ENCODE measurements at regions of chr6 and their contacts with region 1.

Region 1: DNA sequence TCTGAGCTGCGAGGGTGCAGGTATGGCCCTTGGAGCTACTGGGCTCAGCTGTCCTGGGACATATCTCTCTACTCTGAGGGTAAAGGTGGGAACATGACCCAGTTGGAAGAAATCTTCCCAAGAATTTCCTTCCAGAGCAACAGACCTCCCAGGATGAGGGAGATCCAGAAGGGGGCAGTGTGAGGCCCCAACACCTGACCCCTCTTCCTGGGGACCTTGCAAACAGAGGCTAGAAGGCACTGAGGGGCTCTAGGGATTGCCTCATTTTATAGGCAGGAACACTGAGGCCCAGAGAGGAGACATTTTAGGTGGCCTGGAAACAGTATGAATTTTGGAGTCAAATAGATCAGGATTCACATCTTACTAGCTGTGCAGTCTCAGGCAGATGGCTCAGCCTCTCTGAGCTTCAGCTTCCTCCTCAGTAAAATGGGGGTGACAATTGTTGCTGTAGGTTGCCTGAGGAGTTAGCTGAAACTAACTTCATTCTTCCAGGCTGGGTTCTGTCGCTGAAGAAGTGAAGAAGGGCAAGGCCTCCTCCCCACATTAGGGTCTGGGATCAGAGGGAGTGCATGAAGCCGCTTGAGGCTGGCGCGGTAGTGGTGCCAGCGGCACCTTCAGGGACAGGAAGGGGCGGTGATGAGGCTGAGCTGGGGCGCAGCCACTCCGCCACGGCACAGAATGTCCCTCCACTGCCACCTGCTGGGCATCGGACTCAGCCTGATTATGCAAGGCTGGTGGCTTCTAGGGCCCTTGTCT is 11.4 kb downstream of the KCNK17 start:
- DNase-seq: peak; percentile 88 to 91
- H3K4me3 ChIP-seq: no peak overlapping the region
- H3K27ac ChIP-seq: no peak overlapping the region
- H3K4me1 ChIP-seq: peaks cover 0 to 7% of the 10 kb centered on the region in 2 donors
- H3K27me3 ChIP-seq: no peaks in the 10 kb centered on the region
- CTCF ChIP-seq: peak; percentile 73 to 97 (median 92)
- POLR2A ChIP-seq: no peak

Region 2: DNA sequence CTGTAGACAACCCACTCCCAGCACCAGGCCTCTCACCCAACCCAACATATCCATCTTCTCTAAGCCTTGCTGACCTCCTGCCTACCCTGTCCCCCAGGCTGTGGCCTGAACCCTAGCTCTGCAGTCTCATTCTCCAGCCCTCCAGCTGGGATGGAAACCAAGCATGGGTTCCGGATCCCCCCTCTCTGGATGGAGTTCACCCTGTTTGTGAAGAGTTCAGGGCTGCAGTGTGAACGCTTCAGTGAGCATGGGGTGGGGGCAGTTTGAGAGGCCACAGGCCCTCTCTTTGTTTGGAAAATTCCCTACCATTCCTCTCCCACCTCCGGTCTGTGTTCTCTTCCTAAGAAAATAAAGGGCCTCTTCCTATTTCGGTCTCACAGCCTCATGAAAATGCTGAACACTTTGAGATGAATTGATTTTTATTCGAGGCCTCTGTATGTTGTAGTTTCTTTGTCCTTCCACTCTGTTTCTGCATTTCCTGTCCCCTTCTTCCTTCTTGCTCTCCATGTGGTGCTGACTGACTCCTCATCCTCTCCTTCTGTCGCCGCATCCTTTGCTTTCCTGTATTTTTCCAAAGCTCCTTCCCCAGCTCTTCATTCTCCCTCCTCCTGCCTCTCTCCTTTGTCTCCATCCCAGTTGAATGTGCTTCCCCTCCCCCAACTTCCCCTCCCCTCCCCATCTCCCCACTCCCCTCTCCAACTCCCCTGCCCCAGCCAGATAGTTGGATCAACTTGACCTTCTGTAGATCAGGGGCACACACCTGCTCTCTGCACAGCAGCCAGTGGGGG is 71.2 kb before region 1 on chr6:
- intact Hi-C with region 1: loop called (anchors 5 kb)
- DNase-seq: no peak
- H3K4me3 ChIP-seq: no peak overlapping the region
- H3K27ac ChIP-seq: peak overlapping the region in 1 of 3 donors; percentile 43
- H3K4me1 ChIP-seq: peaks cover 10 to 15% of the 10 kb centered on the region in 2 donors
- H3K27me3 ChIP-seq: no peaks in the 10 kb centered on the region
- CTCF ChIP-seq: no peak
- POLR2A ChIP-seq: no peak